CD8-positive, alpha-beta T cell (primary cell): ENCODE measurements at regions of chr7 and their contacts with region 1.

Region 1: GRCh38 chr7:121395961-121396757 is at the start of gene FAM3C:
- DNase-seq: peak; percentile 52 to 89 (median 73)
- ATAC-seq: peak; percentile 76
- H3K4me3 ChIP-seq: peak within 1 kb of the TSS; percentile 55 to 78
- H3K4me3 Mint-ChIP-seq: peak within 1 kb of the TSS; percentile 88
- H3K27ac ChIP-seq: peak within 1 kb of the TSS; percentile 59 to 61
- H3K27ac Mint-ChIP-seq: peak within 1 kb of the TSS; percentile 88
- H3K4me1 ChIP-seq: peaks cover 16% of the 10 kb centered on the region
- H3K4me1 Mint-ChIP-seq: peaks cover 37% of the 10 kb centered on the region
- H3K27me3 ChIP-seq: no peaks in the 10 kb centered on the region
- H3K27me3 Mint-ChIP-seq: no peaks in the 10 kb centered on the region
- CTCF ChIP-seq: peak; percentile 83
- total RNA-seq, gene FAM3C: 11.7 to 11.9 TPM

Region 2: GRCh38 chr7:120950539-120951308 is 445.4 kb before region 1 on chr7 and contains the start of gene ING3:
- CTCF ChIA-PET with region 1: no interaction called
- POLR2A ChIA-PET with region 1: no interaction called
- intact Hi-C with region 1: loop called (anchors 1 to 10 kb)
- DNase-seq: peak; percentile 97 to 99 (median 98)
- ATAC-seq: peak; percentile 85
- H3K4me3 ChIP-seq: peak within 1 kb of the TSS; percentile 63 to 93
- H3K4me3 Mint-ChIP-seq: peak within 1 kb of the TSS; percentile 98
- H3K27ac ChIP-seq: peak within 1 kb of the TSS; percentile 96 to 98
- H3K27ac Mint-ChIP-seq: peak within 1 kb of the TSS; percentile 98
- H3K4me1 ChIP-seq: peaks cover 12% of the 10 kb centered on the region
- H3K4me1 Mint-ChIP-seq: peaks cover 34% of the 10 kb centered on the region
- H3K27me3 ChIP-seq: no peaks in the 10 kb centered on the region
- H3K27me3 Mint-ChIP-seq: peaks cover 22% of the 10 kb centered on the region
- CTCF ChIP-seq: no peak
- total RNA-seq, gene ING3: 51.3 to 53.7 TPM

Region 3: GRCh38 chr7:121410829-121411596 is 14.9 kb after region 1 on chr7:
- CTCF ChIA-PET with region 1: interaction called, 12 read pairs
- POLR2A ChIA-PET with region 1: interaction called, 3 read pairs
- intact Hi-C with region 1: no loop called
- DNase-seq: no peak
- ATAC-seq: no peak
- H3K4me3 ChIP-seq: no peak overlapping the region
- H3K4me3 Mint-ChIP-seq: no peak overlapping the region
- H3K27ac ChIP-seq: no peak overlapping the region
- H3K27ac Mint-ChIP-seq: no peak overlapping the region
- H3K4me1 ChIP-seq: no peaks in the 10 kb centered on the region
- H3K4me1 Mint-ChIP-seq: peaks cover 4% of the 10 kb centered on the region
- H3K27me3 ChIP-seq: peaks cover 0 to 3% of the 10 kb centered on the region in 2 experiments
- H3K27me3 Mint-ChIP-seq: no peaks in the 10 kb centered on the region
- CTCF ChIP-seq: no peak

Region 4: GRCh38 chr7:121437456-121438127 is 41.4 kb after region 1 on chr7:
- CTCF ChIA-PET with region 1: interaction called, 10 read pairs
- POLR2A ChIA-PET with region 1: interaction called, 15 read pairs
- intact Hi-C with region 1: loop called (anchors 1 to 2 kb)
- DNase-seq: no peak
- ATAC-seq: no peak
- H3K4me3 ChIP-seq: peak overlapping the region in 1 of 2 experiments; percentile 27
- H3K4me3 Mint-ChIP-seq: peak overlapping the region; percentile 78
- H3K27ac ChIP-seq: peak overlapping the region in 1 of 2 experiments; percentile 55
- H3K27ac Mint-ChIP-seq: peak overlapping the region; percentile 93
- H3K4me1 ChIP-seq: peaks cover 18% of the 10 kb centered on the region
- H3K4me1 Mint-ChIP-seq: peaks cover 35% of the 10 kb centered on the region
- H3K27me3 ChIP-seq: no peaks in the 10 kb centered on the region
- H3K27me3 Mint-ChIP-seq: no peaks in the 10 kb centered on the region
- CTCF ChIP-seq: no peak

Region 5: DNA sequence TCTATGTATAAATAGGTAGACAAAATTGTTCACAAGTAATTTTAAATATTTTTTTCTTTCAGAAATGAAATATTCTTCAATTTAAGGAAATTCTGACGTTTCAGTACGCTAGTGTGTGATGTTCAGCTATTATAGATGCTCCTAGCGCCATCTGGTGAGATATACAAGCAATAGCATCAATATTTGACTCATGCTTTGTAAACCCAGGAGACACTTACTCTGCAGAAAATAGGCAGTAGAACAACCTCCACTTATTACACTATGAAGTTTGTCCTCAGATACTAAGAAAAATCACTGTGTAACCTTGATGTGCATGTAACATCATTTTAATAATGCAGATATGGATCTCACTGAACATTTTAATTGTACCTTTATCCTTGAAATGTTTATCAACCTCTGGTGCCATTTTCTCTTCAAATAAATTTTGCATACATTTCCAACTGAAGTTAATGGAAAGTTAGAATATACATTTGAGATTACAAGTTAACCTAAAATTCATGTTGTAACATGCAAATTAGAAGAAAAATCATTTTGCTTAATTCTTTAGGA is 151.5 kb after region 1 on chr7:
- CTCF ChIA-PET with region 1: interaction called, 17 read pairs
- POLR2A ChIA-PET with region 1: no interaction called
- intact Hi-C with region 1: no loop called
- DNase-seq: peak in 2 of 9 experiments; percentile 67 to 75
- ATAC-seq: peak; percentile 85
- H3K4me3 ChIP-seq: no peak overlapping the region
- H3K4me3 Mint-ChIP-seq: no peak overlapping the region
- H3K27ac ChIP-seq: no peak overlapping the region
- H3K27ac Mint-ChIP-seq: no peak overlapping the region
- H3K4me1 ChIP-seq: no peaks in the 10 kb centered on the region
- H3K4me1 Mint-ChIP-seq: peaks cover 7% of the 10 kb centered on the region
- H3K27me3 ChIP-seq: no peaks in the 10 kb centered on the region
- H3K27me3 Mint-ChIP-seq: no peaks in the 10 kb centered on the region
- CTCF ChIP-seq: peak; percentile 85